Activated T-helper 2 cell treated with anti-CD3 and anti-CD28 coated beads, Interferon-gamma antibody, Interleukin-2, Interleukin-4, amounts not matched to agents 10 μg/mL and 5 μg/mL and 100 μg/mL, durations not matched to agents 14 hours and 24 hours and 36 hours (primary cell): ENCODE measurements at regions of chr6 and their contacts with region 1.

Region 1: DNA sequence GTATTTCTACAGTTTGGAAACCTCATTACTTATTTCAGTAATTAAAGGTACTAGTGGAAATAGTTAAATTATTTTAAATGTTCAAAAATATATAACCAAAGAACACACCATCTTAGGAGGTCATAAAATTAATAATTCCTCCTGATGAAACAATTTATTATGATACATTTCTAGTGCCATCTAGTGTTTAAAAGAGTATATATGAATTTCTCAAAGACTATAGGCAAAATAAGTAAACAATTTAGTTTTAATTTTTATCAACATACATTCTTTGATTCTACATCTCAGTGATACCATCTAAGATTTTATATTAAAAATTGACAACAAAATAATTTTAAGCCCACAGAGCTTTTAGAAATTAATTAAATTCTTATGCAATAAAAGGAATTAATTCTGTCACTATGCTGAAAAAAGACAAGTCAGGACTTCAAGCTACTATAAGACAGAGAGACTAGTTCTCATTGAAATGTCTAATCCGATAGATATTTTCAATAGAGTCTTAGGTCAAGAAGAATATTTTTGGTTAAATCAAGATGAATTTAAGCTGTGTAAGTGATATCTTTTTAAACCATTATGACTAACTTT is 107.8 kb upstream of the RNF217 start:
- DNase-seq: no peak
- H3K4me3 Mint-ChIP-seq: no peak overlapping the region
- H3K27ac Mint-ChIP-seq: no peak overlapping the region
- H3K4me1 Mint-ChIP-seq: no peaks in the 10 kb centered on the region
- H3K27me3 Mint-ChIP-seq: no peaks in the 10 kb centered on the region

Region 2: DNA sequence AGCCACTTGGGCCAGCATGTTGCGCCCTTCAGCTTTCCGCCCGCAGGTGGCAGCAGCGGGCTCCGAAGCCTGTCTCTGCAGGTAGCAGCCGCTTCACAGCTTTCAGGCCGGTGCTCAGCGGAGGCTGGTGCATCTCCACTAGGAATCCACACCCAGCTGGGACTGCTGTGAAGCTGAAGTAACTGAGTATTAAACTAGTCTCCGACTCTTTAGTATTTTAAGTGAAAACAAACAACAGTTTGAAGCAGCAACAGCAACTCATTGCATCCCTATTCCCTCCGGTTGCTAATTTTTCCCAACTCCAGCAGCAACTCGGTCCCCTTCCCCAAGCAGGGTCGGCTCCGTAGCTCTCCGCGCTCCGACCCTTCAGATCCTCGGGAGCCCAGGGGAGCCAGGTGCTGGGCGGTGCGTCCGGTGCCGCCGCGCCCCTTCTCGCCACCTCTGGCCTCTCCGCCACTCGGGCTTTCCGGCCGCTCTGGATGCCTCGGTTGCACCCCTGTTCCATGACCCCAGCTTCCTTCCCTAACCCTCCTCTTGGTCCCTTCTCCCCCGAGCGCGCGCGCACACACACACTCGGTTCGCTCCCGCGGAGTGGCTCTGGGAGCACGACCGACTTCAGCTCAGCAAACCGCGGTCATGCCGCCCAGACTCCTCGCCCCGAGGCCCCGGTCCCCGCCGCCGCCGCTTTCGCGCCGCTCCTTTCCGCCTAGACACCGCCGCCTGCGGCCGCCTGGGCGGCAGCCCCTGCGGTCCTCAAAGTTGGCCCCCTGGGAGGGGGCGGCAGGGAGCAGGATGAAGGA is 1051.5 kb before region 1 on chr6:
- intact Hi-C with region 1: loop called (anchors 10 kb)
- DNase-seq: peak; percentile 52
- H3K4me3 Mint-ChIP-seq: peak overlapping the region; percentile 58
- H3K27ac Mint-ChIP-seq: no peak overlapping the region
- H3K4me1 Mint-ChIP-seq: peaks cover 8% of the 10 kb centered on the region
- H3K27me3 Mint-ChIP-seq: peaks cover 32% of the 10 kb centered on the region

Region 3: DNA sequence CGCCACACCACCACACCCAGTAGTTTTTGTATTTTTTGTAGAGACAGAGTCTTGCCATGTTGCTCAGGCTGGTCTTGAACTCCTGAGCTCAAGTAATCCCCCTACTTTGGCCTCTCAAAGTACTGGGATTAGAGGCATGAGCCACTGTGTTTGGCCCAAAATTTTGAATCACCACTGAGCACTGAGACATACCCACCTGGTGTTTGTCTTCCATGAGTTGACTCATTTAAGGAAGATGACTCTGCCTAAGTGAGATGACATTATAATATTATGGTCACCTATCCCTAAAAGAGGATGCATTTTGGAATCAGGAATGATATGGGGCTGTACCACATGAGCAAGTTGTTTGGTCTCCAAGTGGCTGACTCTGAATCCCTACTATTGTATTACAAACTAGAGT is 53.2 kb after region 1 on chr6:
- intact Hi-C with region 1: no loop called
- DNase-seq: no peak
- H3K4me3 Mint-ChIP-seq: no peak overlapping the region
- H3K27ac Mint-ChIP-seq: no peak overlapping the region
- H3K4me1 Mint-ChIP-seq: no peaks in the 10 kb centered on the region
- H3K27me3 Mint-ChIP-seq: no peaks in the 10 kb centered on the region